Caco-2 (cell line): ENCODE measurements at regions of chr1 and their contacts with region 1.

Region 1: GRCh38 chr1:8848663-8849386 is 29.7 kb downstream of the ENO1 start:
- DNase-seq: peak; percentile 72 to 88
- H3K4me3 ChIP-seq: no peak overlapping the region
- H3K4me3 Mint-ChIP-seq: no peak overlapping the region
- H3K27ac Mint-ChIP-seq: no peak overlapping the region
- H3K4me1 ChIP-seq: no peaks in the 10 kb centered on the region; the same call in 1 of the 2 replicates
- H3K4me1 Mint-ChIP-seq: no peaks in the 10 kb centered on the region
- H3K27me3 ChIP-seq: no peaks in the 10 kb centered on the region
- H3K27me3 Mint-ChIP-seq: no peaks in the 10 kb centered on the region
- CTCF ChIP-seq: peak; percentile 85 to 92

Region 2: DNA sequence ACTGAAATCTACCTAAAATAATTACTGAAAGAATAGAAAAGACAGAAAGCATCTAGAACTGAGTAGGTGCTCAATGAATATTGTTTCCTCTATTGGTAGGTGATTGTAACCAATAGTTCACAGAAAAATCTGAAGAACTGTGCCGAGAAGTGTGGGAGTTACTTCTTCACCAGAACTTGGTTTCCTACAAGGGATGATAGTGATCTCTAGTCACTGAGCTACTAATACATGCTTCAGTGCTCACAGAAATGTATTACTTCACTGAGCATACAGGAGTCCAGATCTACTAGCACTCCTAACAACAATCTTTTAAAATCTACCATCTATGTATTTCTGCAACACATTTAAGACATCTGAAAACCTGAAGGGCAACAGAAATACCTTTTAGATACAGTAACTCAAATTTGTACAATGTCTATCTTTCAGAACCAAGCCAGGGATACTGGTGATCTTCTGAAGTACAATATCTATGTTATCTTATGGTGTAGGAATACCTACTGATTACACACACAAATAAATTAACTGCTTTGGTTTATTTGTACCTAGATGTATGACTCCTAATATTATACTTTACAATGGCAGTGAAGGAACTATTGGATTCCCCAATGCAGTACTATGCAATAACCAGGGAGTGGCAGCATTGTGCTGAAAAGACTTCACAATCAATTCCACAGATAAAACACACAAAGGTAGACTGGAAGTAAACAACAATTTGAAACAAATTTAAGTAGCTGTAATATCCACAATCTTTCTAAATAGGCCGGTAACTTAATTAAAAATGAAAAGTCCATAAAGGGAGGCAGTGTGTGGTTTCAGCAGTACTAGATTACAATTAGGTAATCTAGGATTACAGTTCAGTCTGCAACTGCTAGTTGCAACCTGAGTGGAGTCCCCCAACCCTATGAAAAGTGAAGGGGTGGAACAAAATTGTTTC is 287.9 kb before region 1 on chr1:
- CTCF ChIA-PET with region 1: interaction called, 4 read pairs
- POLR2A ChIA-PET with region 1: no interaction called
- intact Hi-C with region 1: loop called (anchors 2 kb)
- DNase-seq: peak in 1 of 2 experiments; percentile 42
- H3K4me3 ChIP-seq: no peak overlapping the region
- H3K4me3 Mint-ChIP-seq: no peak overlapping the region
- H3K27ac Mint-ChIP-seq: no peak overlapping the region
- H3K4me1 ChIP-seq: peaks cover 50% of the 10 kb centered on the region
- H3K4me1 Mint-ChIP-seq: peaks cover 27% of the 10 kb centered on the region
- H3K27me3 ChIP-seq: no peaks in the 10 kb centered on the region
- H3K27me3 Mint-ChIP-seq: no peaks in the 10 kb centered on the region
- CTCF ChIP-seq: peak; percentile 72 to 73

Region 3: GRCh38 chr1:8740034-8740449 is 108.8 kb before region 1 on chr1:
- CTCF ChIA-PET with region 1: interaction called, 3 read pairs
- POLR2A ChIA-PET with region 1: no interaction called
- intact Hi-C with region 1: loop called (anchors 10 kb)
- DNase-seq: no peak
- H3K4me3 ChIP-seq: no peak overlapping the region
- H3K4me3 Mint-ChIP-seq: no peak overlapping the region
- H3K27ac Mint-ChIP-seq: no peak overlapping the region
- H3K4me1 ChIP-seq: peaks cover 25% of the 10 kb centered on the region
- H3K4me1 Mint-ChIP-seq: peaks cover 15% of the 10 kb centered on the region
- H3K27me3 ChIP-seq: no peaks in the 10 kb centered on the region
- H3K27me3 Mint-ChIP-seq: no peaks in the 10 kb centered on the region
- CTCF ChIP-seq: no peak

Region 4: GRCh38 chr1:8789314-8790214 is 59.3 kb before region 1 on chr1:
- CTCF ChIA-PET with region 1: interaction called, 9 read pairs
- POLR2A ChIA-PET with region 1: no interaction called
- intact Hi-C with region 1: loop called (anchors 5 kb)
- DNase-seq: peak; percentile 87 to 91
- H3K4me3 ChIP-seq: peak overlapping the region; percentile 4; the same call in 1 of the 2 replicates
- H3K4me3 Mint-ChIP-seq: peak overlapping the region; percentile 72
- H3K27ac Mint-ChIP-seq: peak overlapping the region; percentile 93
- H3K4me1 ChIP-seq: peaks cover 30% of the 10 kb centered on the region
- H3K4me1 Mint-ChIP-seq: peaks cover 31% of the 10 kb centered on the region
- H3K27me3 ChIP-seq: no peaks in the 10 kb centered on the region
- H3K27me3 Mint-ChIP-seq: no peaks in the 10 kb centered on the region
- CTCF ChIP-seq: no peak

Region 5: DNA sequence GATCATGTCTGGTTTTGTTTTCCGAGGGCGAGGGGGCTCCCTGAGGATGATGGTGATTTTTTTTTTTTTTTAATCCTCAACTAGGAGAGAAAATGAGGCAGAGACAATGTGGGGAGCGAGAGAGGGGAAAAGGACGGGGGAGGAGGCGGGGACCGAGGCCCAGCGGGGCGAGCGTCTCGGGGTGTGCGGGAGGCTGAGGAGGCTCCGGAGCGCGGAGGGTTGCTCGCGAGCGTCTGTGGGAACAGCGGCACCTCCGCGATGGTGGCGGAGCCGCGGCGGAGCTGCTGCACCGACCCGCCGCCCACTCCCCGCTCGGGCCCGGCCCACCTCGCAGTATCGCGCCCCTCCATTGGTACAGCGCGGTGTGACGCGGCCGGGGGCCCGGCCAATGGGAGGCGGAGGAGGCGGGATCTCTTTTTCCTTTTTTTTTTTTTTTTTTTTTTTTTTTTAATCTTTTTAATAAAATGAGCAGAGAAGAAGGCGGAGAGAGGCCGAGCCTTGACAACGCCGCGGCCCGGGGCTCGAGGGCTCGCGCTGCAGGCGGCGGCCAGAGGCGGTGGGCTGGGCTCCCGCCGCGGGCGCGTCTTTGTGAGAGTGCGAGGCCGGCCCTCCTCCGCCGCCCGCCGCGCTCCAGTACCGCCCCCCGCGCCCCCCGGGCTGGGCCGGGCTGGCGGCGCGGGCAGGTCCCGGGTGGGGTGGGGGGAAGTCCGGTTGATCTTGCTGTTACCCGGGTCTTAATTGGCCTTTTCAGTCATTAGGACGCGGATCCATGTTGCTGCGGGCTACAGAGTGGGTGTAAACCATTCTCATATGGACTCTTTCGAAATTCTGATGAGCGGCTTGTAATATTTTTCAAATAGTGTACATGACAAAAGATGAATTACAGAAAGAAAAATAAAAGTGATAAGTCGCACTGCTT is 31.2 kb before region 1 on chr1 and contains the start of gene RERE:
- CTCF ChIA-PET with region 1: interaction called, 10 read pairs
- POLR2A ChIA-PET with region 1: interaction called, 3 read pairs
- intact Hi-C with region 1: no loop called
- DNase-seq: peak; percentile 93 to 98
- H3K4me3 ChIP-seq: peak within 1 kb of the TSS; percentile 84
- H3K4me3 Mint-ChIP-seq: peak within 1 kb of the TSS; percentile 92
- H3K27ac Mint-ChIP-seq: peak within 1 kb of the TSS; percentile 92
- H3K4me1 ChIP-seq: peaks cover 9% of the 10 kb centered on the region; the same call in 1 of the 2 replicates
- H3K4me1 Mint-ChIP-seq: peaks cover 32% of the 10 kb centered on the region
- H3K27me3 ChIP-seq: no peaks in the 10 kb centered on the region
- H3K27me3 Mint-ChIP-seq: no peaks in the 10 kb centered on the region
- CTCF ChIP-seq: peak in 1 of 2 experiments; percentile 6
- total RNA-seq, gene RERE: 85.2 and 91.1 TPM in 2 replicates

Region 6: DNA sequence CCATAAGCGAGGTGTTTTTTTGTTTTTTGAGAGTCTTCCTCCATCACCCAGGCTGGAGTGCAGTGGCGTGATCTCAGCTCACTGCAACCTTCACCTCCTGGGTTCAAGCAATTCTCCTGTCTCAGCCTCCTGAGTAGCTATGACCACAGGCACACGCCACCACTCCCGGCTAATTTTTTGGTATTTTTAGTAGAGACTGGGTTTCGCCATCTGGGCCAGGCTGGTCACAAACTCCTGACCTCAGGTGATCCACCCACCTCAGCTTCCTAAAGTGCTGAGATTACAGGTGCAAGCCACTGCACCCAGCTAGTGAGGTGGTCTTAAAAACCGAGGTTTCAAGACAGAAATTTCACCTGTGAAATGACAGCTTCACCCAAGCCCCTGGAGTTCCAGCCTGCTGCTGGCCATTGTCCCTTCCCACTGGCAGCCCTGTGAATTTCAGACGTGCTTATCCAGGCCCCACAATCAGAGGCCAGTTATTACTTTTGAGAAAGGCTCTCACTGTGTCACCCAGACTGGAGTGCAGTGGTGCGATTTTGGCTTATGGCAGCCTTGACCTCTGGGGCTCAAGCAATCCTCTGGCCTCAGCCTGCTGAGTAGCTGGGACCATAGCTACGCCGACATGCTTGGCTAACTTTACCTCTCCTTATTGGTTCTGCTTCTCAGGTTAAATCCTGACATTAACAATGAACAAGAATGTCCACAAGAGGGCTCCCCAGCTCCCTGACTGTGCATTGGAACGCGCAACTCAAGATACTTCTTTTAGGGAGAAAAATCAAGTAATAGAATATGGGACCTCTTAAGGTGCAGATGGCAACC is 10.3 kb after region 1 on chr1:
- CTCF ChIA-PET with region 1: interaction called, 31 read pairs
- POLR2A ChIA-PET with region 1: no interaction called
- intact Hi-C with region 1: no loop called
- DNase-seq: peak; percentile 53 to 68
- H3K4me3 ChIP-seq: no peak overlapping the region
- H3K4me3 Mint-ChIP-seq: no peak overlapping the region
- H3K27ac Mint-ChIP-seq: peak overlapping the region; percentile 45
- H3K4me1 ChIP-seq: peaks cover 21% of the 10 kb centered on the region
- H3K4me1 Mint-ChIP-seq: peaks cover 6% of the 10 kb centered on the region
- H3K27me3 ChIP-seq: no peaks in the 10 kb centered on the region
- H3K27me3 Mint-ChIP-seq: no peaks in the 10 kb centered on the region
- CTCF ChIP-seq: peak; percentile 36 to 63

Region 7: GRCh38 chr1:9086796-9087195 is 238.0 kb after region 1 on chr1:
- CTCF ChIA-PET with region 1: no interaction called
- POLR2A ChIA-PET with region 1: no interaction called
- intact Hi-C with region 1: no loop called
- DNase-seq: no peak
- H3K4me3 ChIP-seq: no peak overlapping the region
- H3K4me3 Mint-ChIP-seq: no peak overlapping the region
- H3K27ac Mint-ChIP-seq: no peak overlapping the region
- H3K4me1 ChIP-seq: peaks cover 18% of the 10 kb centered on the region
- H3K4me1 Mint-ChIP-seq: peaks cover 12% of the 10 kb centered on the region
- H3K27me3 ChIP-seq: no peaks in the 10 kb centered on the region
- H3K27me3 Mint-ChIP-seq: no peaks in the 10 kb centered on the region
- CTCF ChIP-seq: no peak